ENCODE measurements at regions of chr11 and their contacts with region 1.

Region 1: GRCh38 chr11:86041975-86042378 is 26.9 kb downstream of the PICALM start:
- DNase-seq: peak; percentile 68
- ATAC-seq: peak; percentile 82
- H3K4me3 Mint-ChIP-seq: no peak overlapping the region
- H3K27ac Mint-ChIP-seq: peak overlapping the region; percentile 49
- H3K4me1 Mint-ChIP-seq: peaks cover 66% of the 10 kb centered on the region
- H3K27me3 Mint-ChIP-seq: no peaks in the 10 kb centered on the region
- CTCF ChIP-seq: peak; percentile 80

Region 2: GRCh38 chr11:86015699-86016098 is 26.3 kb before region 1 on chr11:
- CTCF ChIA-PET with region 1: interaction called, 26 read pairs
- POLR2A ChIA-PET with region 1: no interaction called
- intact Hi-C with region 1: no loop called
- DNase-seq: no peak
- ATAC-seq: no peak
- H3K4me3 Mint-ChIP-seq: no peak overlapping the region
- H3K27ac Mint-ChIP-seq: peak overlapping the region; percentile 18
- H3K4me1 Mint-ChIP-seq: peaks cover 25% of the 10 kb centered on the region
- H3K27me3 Mint-ChIP-seq: no peaks in the 10 kb centered on the region
- CTCF ChIP-seq: no peak

Region 3: GRCh38 chr11:86021377-86021776 is 20.6 kb before region 1 on chr11:
- CTCF ChIA-PET with region 1: interaction called, 26 read pairs
- POLR2A ChIA-PET with region 1: no interaction called
- intact Hi-C with region 1: no loop called
- DNase-seq: no peak
- ATAC-seq: peak; percentile 70
- H3K4me3 Mint-ChIP-seq: no peak overlapping the region
- H3K27ac Mint-ChIP-seq: no peak overlapping the region
- H3K4me1 Mint-ChIP-seq: peaks cover 43% of the 10 kb centered on the region
- H3K27me3 Mint-ChIP-seq: no peaks in the 10 kb centered on the region
- CTCF ChIP-seq: no peak

Region 4: GRCh38 chr11:86068951-86069407 is 27.0 kb after region 1 on chr11 and contains the start of gene PICALM:
- CTCF ChIA-PET with region 1: interaction called, 47 read pairs
- POLR2A ChIA-PET with region 1: interaction called, 6 read pairs
- intact Hi-C with region 1: loop called (anchors 2 kb)
- DNase-seq: peak; percentile 98
- ATAC-seq: peak; percentile 91
- H3K4me3 Mint-ChIP-seq: peak within 1 kb of the TSS; percentile 100
- H3K27ac Mint-ChIP-seq: peak within 1 kb of the TSS; percentile 98
- H3K4me1 Mint-ChIP-seq: peaks cover 21% of the 10 kb centered on the region
- H3K27me3 Mint-ChIP-seq: no peaks in the 10 kb centered on the region
- CTCF ChIP-seq: no peak
- total RNA-seq, gene PICALM: 57.5 to 61.2 TPM

Region 5: GRCh38 chr11:86202013-86202336 is 160.0 kb after region 1 on chr11:
- CTCF ChIA-PET with region 1: interaction called, 12 read pairs
- POLR2A ChIA-PET with region 1: interaction called, 3 read pairs
- intact Hi-C with region 1: no loop called
- DNase-seq: peak; percentile 40
- ATAC-seq: peak; percentile 90
- H3K4me3 Mint-ChIP-seq: no peak overlapping the region
- H3K27ac Mint-ChIP-seq: no peak overlapping the region
- H3K4me1 Mint-ChIP-seq: peaks cover 6% of the 10 kb centered on the region
- H3K27me3 Mint-ChIP-seq: no peaks in the 10 kb centered on the region
- CTCF ChIP-seq: no peak

Region 6: GRCh38 chr11:86218125-86219084 is 176.4 kb after region 1 on chr11:
- CTCF ChIA-PET with region 1: interaction called, 14 read pairs
- POLR2A ChIA-PET with region 1: interaction called, 6 read pairs
- intact Hi-C with region 1: loop called (anchors 5 kb)
- DNase-seq: peak; percentile 69
- ATAC-seq: peak; percentile 48
- H3K4me3 Mint-ChIP-seq: peak overlapping the region; percentile 48
- H3K27ac Mint-ChIP-seq: peak overlapping the region; percentile 86
- H3K4me1 Mint-ChIP-seq: peaks cover 67% of the 10 kb centered on the region
- H3K27me3 Mint-ChIP-seq: peaks cover 3% of the 10 kb centered on the region
- CTCF ChIP-seq: peak; percentile 86

Measured in activated CD8-positive, alpha-beta T cell treated with anti-CD3 and anti-CD28 coated beads for 36 hours (primary cell).